ENCODE measurements at regions of chr17 and their contacts with region 1.

Region 1: DNA sequence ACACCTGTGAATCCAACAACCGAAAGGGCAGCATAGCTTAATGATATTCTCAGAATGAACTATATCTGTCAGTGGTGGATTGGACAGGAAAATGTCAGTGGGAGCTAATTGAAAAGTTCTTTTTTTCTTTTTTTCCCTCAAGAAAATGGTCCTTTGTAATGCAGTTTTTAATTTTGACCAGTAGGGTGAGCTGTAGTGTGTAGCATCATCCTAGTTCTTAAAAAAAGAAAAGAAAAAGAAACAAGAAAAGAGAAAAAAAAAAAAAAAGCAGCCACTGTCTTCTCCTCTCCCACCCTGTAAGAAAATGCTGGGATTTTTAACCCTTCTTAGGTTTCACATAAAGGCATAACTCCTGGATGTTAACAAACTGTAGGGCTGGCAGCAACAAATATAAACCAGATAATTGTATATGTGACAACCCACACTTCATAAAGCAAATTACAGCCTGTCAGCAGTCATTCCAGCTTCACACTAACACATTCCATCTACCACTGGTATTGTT is 78.1 kb downstream of the SKAP1 start:
- DNase-seq: no peak
- ATAC-seq: peak; percentile 30
- H3K4me3 Mint-ChIP-seq: no peak overlapping the region
- H3K27ac Mint-ChIP-seq: no peak overlapping the region
- H3K4me1 Mint-ChIP-seq: peaks cover 14% of the 10 kb centered on the region
- H3K27me3 Mint-ChIP-seq: no peaks in the 10 kb centered on the region

Region 2: GRCh38 chr17:48270896-48271295 is 81.0 kb before region 1 on chr17:
- CTCF ChIA-PET with region 1: no interaction called
- DNase-seq: no peak
- ATAC-seq: no peak
- H3K4me3 Mint-ChIP-seq: no peak overlapping the region
- H3K27ac Mint-ChIP-seq: no peak overlapping the region
- H3K4me1 Mint-ChIP-seq: peaks cover 8% of the 10 kb centered on the region
- H3K27me3 Mint-ChIP-seq: no peaks in the 10 kb centered on the region

Region 3: GRCh38 chr17:48335858-48336500 is 15.9 kb before region 1 on chr17:
- CTCF ChIA-PET with region 1: interaction called, 16 read pairs
- DNase-seq: no peak
- ATAC-seq: peak; percentile 63
- H3K4me3 Mint-ChIP-seq: no peak overlapping the region
- H3K27ac Mint-ChIP-seq: no peak overlapping the region
- H3K4me1 Mint-ChIP-seq: peaks cover 15% of the 10 kb centered on the region
- H3K27me3 Mint-ChIP-seq: no peaks in the 10 kb centered on the region

Region 4: DNA sequence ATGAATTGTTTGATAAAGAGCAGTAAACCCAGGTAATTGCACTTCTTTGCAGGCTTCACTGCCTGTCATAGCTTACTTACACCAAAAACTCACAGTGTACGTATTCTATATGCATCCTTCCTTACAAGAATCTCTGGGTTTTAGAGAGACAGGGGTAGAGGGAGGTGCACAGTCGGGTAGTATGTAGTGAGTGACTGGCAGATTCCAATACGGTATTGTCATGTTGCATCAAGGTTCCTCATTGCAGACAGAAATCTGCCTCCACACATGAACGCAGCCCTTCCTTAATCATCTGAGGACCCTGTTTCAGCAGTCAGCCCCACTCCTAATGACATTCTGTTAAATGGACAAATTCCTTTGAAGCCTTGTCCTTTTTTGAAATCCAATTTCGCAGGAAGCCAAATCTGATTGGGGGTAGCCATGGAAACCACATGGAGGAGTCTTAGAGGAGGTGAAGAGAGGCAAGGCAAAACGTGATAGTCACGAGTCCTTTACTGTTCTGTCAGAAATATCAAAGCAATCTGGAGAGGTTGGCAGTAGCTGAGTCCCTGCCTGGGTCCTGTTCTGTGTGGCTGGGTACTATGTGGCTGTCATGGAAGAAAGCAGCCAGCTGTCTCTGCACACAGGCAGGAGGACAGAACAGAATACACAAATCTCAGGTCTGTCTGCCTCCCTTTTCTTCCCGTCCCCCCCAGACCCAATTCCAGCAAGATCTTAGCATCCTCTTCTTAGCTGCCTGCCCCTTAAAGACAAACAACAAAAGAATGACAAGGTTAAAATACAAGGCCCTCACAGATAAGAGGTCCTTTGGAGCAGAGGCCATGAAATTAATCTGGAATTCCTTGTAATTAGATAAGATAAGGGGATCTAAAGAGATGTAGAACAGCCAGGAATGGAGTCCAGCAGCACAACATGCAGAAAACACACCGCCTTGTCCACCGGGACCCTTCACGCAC is 81.2 kb after region 1 on chr17:
- CTCF ChIA-PET with region 1: interaction called, 10 read pairs
- DNase-seq: no peak
- ATAC-seq: no peak
- H3K4me3 Mint-ChIP-seq: no peak overlapping the region
- H3K27ac Mint-ChIP-seq: no peak overlapping the region
- H3K4me1 Mint-ChIP-seq: peaks cover 41% of the 10 kb centered on the region
- H3K27me3 Mint-ChIP-seq: no peaks in the 10 kb centered on the region

Region 5: GRCh38 chr17:48586355-48587258 is 234.7 kb after region 1 on chr17:
- CTCF ChIA-PET with region 1: interaction called, 29 read pairs
- DNase-seq: peak; percentile 56
- ATAC-seq: no peak
- H3K4me3 Mint-ChIP-seq: peak overlapping the region; percentile 80
- H3K27ac Mint-ChIP-seq: peak overlapping the region; percentile 82
- H3K4me1 Mint-ChIP-seq: peaks cover 42% of the 10 kb centered on the region
- H3K27me3 Mint-ChIP-seq: peaks cover 74% of the 10 kb centered on the region